AG04449 (cell line): ENCODE measurements at regions of chr3 and their contacts with region 1.

Region 1: DNA sequence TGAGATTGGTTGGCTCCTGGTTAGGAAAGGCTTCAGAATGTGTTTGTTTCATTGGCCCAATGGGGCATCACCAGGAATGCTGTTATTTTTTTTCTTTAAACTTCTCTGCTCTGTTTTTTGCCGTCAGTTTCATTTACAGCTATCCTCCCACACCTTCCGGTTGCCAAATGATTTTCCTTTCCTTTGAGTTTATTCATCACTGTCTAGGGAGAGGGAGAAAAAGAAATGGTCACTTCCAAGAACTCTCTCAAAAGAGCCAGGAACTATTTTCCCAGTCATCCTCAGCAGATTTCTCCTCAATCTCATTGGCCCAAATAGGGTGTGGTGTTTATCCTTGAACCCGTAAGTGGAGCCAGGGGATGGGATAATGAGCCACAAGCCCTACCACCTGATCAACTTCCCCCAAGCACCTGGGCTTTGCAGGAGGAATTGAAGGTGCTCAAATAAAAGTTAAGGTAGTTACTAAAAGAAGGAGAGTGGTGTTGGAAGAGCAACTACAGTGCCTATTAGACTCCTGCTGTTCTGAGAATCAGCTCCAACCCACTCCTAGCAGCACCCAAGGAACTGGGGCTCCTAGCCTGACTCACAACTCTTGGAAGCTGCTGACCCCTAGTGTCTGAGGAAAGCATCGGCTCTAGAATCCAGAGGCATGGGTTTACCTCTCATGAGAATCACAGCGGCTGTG is 183.8 kb upstream of the IL12A start:
- DNase-seq: no peak
- H3K4me3 ChIP-seq: no peak overlapping the region
- CTCF ChIP-seq: peak; percentile 92

Region 2: GRCh38 chr3:159260049-159260662 is 544.7 kb before region 1 on chr3:
- CTCF ChIA-PET with region 1: interaction called, 32 read pairs
- POLR2A ChIA-PET with region 1: no interaction called
- DNase-seq: peak; percentile 69
- H3K4me3 ChIP-seq: no peak overlapping the region
- CTCF ChIP-seq: peak; percentile 54

Region 3: GRCh38 chr3:159609625-159610024 is 195.2 kb before region 1 on chr3:
- CTCF ChIA-PET with region 1: interaction called, 83 read pairs
- POLR2A ChIA-PET with region 1: no interaction called
- DNase-seq: no peak
- H3K4me3 ChIP-seq: no peak overlapping the region
- CTCF ChIP-seq: no peak

Region 4: GRCh38 chr3:159624616-159625015 is 180.3 kb before region 1 on chr3:
- CTCF ChIA-PET with region 1: interaction called, 29 read pairs
- POLR2A ChIA-PET with region 1: no interaction called
- DNase-seq: no peak
- H3K4me3 ChIP-seq: no peak overlapping the region
- CTCF ChIP-seq: no peak

Region 5: GRCh38 chr3:159732172-159733111 is 72.4 kb before region 1 on chr3:
- CTCF ChIA-PET with region 1: interaction called, 29 read pairs
- POLR2A ChIA-PET with region 1: no interaction called
- DNase-seq: peak; percentile 95
- H3K4me3 ChIP-seq: peak overlapping the region; percentile 42
- CTCF ChIP-seq: no peak

Region 6: GRCh38 chr3:159787191-159787590 is 17.7 kb before region 1 on chr3:
- CTCF ChIA-PET with region 1: interaction called, 61 read pairs
- POLR2A ChIA-PET with region 1: no interaction called
- DNase-seq: no peak
- H3K4me3 ChIP-seq: no peak overlapping the region
- CTCF ChIP-seq: no peak